AG04450 (cell line): ENCODE measurements at regions of chr12 and their contacts with region 1.

Region 1: DNA sequence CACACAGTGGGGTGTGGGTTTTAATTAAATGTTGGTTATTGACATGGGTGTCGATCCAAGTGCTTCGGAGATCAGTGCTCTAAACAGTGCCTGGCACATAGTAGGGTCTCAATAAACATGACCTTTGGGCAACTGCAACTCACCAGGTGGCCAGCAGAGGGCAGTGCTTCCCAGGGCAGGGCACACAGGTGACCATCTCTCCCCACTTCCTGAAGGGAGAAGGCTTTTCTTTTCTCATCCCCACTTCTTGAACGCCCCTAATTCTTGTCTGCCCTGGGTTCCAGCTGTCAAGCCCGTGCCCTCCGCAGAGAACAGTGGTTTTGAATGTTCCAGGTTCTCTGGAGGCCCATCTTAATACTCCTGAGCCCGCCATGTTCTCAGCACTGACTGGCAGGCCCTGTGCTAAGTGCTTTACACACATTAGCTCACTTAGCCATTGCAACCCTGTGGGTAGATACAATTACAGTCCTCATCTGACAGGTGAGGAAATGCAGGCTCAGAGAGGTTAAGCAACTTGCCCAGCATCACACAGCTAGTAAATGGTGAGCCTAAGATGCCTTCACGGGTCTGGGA is 16.3 kb downstream of the RAPGEF3 start:
- DNase-seq: no peak
- H3K4me3 ChIP-seq: no peak overlapping the region
- H3K27ac ChIP-seq: no peak overlapping the region
- H3K27me3 ChIP-seq: peaks cover 36% of the 10 kb centered on the region
- CTCF ChIP-seq: peak; percentile 99

Region 2: DNA sequence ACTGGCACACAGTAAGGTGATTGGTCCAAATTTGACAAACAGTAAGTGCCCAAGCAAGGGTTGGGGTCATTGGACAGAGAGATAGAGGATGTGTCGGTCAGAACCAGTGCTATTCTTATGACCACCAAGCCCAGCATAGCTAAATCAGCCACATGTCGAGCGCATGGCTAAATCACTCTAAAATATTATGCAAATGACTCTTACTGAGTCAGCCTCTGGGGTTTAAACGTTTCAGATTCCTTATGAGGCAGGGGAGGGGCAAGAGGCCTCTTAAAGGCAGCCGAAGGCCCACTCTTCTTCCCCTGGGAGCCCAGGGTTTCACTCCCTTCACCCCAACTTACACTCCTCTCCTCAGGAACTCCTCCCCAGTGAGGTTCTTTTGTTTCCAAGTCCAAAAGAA is 16.4 kb before region 1 on chr12:
- CTCF ChIA-PET with region 1: interaction called, 52 read pairs
- POLR2A ChIA-PET with region 1: no interaction called
- DNase-seq: no peak
- H3K4me3 ChIP-seq: no peak overlapping the region
- H3K27ac ChIP-seq: peak overlapping the region; percentile 70
- H3K27me3 ChIP-seq: no peaks in the 10 kb centered on the region
- CTCF ChIP-seq: no peak

Region 3: DNA sequence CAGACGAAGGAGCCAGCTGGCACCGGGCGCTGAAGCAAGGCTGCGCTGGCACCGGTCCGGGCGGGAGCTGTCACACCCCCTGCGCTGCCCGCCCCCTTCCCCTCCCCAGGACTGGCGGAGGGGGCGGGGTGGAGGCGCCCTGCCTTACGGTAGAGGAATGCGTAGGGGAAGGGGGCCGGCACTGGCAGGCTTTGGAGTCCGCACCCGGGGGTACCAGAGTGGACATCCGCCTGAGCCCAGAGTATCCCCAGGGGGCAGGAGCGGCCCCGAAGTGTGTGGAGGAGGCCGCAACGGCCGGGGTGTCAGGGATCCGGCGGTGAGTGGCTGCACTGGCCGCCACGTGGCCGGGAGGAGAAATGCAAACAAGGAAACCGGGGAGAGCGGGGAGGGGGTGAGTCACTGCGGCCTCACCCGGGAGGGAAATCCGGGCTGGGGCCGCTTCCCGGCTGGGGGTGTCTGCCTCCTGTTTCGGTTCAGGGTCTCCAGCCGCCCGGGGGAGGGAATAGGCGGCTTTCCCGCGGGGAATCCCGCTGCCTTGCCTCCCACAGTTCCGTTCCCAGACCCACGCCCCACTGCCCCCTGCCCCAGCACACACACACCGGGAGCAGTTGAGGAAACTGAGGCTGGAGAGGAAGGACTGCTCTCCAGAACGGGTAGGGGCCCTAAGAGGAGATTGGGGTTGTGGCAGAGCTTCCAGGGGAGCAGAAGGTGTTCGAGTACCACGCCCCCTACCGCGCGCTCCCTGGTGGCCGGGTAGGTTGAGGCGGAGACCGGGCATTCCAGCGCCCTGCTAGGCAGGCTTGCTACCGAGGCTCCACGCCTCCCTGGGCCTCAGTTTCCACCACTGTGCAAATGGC is 16.7 kb after region 1 on chr12 and contains the start of gene RAPGEF3:
- CTCF ChIA-PET with region 1: interaction called, 116 read pairs
- POLR2A ChIA-PET with region 1: interaction called, 3 read pairs
- DNase-seq: no peak
- H3K4me3 ChIP-seq: peak within 1 kb of the TSS; percentile 69
- H3K27ac ChIP-seq: peak within 1 kb of the TSS; percentile 65
- H3K27me3 ChIP-seq: no peaks in the 10 kb centered on the region
- CTCF ChIP-seq: peak; percentile 48
- polyA plus RNA-seq, gene RAPGEF3: 1.7 and 2.1 TPM in 2 replicates

Region 4: DNA sequence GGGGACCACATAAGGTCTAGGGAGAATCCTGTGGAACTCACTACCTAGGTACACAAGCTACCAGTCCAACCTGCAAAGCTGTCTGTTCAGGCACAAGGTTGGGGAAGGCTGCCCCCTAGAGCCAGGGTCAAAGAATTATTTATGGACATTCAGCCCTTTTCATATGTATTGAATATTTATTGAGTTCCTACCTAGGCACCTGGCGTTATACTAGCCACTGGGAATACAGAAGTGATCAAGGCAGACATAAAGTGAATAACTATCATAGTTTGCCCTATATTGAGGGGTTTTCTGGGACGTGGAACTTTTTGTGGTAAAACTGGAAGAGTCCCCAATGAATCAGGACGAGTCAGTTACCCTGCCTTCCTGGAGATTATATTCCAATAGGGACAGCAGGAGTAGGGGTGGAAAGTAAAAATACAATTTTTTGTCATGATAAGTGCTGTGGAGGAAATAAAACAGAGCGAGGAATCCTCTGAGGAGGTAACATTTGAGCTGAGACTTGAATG is 24.9 kb after region 1 on chr12:
- CTCF ChIA-PET with region 1: interaction called, 116 read pairs
- POLR2A ChIA-PET with region 1: no interaction called
- DNase-seq: no peak
- H3K4me3 ChIP-seq: no peak overlapping the region
- H3K27ac ChIP-seq: no peak overlapping the region
- H3K27me3 ChIP-seq: no peaks in the 10 kb centered on the region
- CTCF ChIP-seq: peak; percentile 54

Region 5: GRCh38 chr12:47779301-47779942 is 37.1 kb after region 1 on chr12:
- CTCF ChIA-PET with region 1: interaction called, 76 read pairs
- POLR2A ChIA-PET with region 1: interaction called, 6 read pairs
- DNase-seq: peak; percentile 64
- H3K4me3 ChIP-seq: no peak overlapping the region
- H3K27ac ChIP-seq: no peak overlapping the region
- H3K27me3 ChIP-seq: no peaks in the 10 kb centered on the region
- CTCF ChIP-seq: peak; percentile 95

Region 6: GRCh38 chr12:47828608-47829536 is 86.5 kb after region 1 on chr12:
- CTCF ChIA-PET with region 1: interaction called, 22 read pairs
- POLR2A ChIA-PET with region 1: no interaction called
- DNase-seq: no peak
- H3K4me3 ChIP-seq: no peak overlapping the region
- H3K27ac ChIP-seq: peak overlapping the region; percentile 11
- H3K27me3 ChIP-seq: no peaks in the 10 kb centered on the region
- CTCF ChIP-seq: no peak

Region 7: GRCh38 chr12:47963340-47964040 is 221.2 kb after region 1 on chr12 and contains the start of gene TMEM106C:
- CTCF ChIA-PET with region 1: interaction called, 11 read pairs
- POLR2A ChIA-PET with region 1: no interaction called
- DNase-seq: peak; percentile 74
- H3K4me3 ChIP-seq: peak within 1 kb of the TSS; percentile 87
- H3K27ac ChIP-seq: no peak within 1 kb of the TSS
- H3K27me3 ChIP-seq: peaks cover 3% of the 10 kb centered on the region
- CTCF ChIP-seq: peak; percentile 99
- polyA plus RNA-seq, gene TMEM106C: 93.7 and 96.3 TPM in 2 replicates